ENCODE measurements at regions of chr17 and their contacts with region 1.

Region 1: DNA sequence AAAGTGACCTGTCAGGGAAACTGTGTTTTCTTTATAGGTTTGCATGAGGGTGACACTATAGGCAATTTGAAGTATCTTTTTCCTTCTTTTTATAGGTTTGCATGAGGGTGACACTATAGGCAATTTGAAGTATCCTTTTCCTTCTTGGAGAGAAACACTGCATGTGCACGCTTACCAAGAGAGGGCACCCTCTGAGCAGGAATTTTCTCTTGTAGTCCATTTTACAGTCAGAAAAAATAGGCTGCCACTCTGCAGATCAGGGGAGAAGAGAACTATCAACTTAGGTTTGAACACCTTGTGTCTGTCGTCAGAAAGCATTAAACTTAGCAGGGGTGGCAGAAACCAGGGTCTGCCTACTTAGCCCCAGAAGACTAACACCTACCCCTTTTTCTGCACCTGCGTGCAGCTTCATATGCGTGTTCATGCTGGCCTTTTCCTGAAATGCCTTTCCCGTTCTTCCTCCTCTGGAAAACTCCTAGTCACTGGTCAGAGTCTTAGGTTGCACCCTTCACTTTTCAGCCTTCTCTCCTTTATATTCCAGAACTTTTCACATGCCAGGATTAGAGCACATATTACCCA is 16.4 kb upstream of the SMIM36 start:
- DNase-seq: peak in 2 of 4 donors; percentile 27 to 62
- ATAC-seq: peak; percentile 82
- H3K4me3 ChIP-seq: no peak overlapping the region
- H3K27ac ChIP-seq: no peak overlapping the region
- H3K4me1 ChIP-seq: no peaks in the 10 kb centered on the region
- H3K27me3 ChIP-seq: no peaks in the 10 kb centered on the region
- CTCF ChIP-seq: peak; percentile 37 to 46

Region 2: GRCh38 chr17:55410722-55411462 is 116.7 kb before region 1 on chr17:
- intact Hi-C with region 1: no loop called
- DNase-seq: no peak
- ATAC-seq: peak; percentile 78
- H3K4me3 ChIP-seq: no peak overlapping the region
- H3K27ac ChIP-seq: no peak overlapping the region
- H3K4me1 ChIP-seq: no peaks in the 10 kb centered on the region
- H3K27me3 ChIP-seq: no peaks in the 10 kb centered on the region
- CTCF ChIP-seq: no peak

Region 3: DNA sequence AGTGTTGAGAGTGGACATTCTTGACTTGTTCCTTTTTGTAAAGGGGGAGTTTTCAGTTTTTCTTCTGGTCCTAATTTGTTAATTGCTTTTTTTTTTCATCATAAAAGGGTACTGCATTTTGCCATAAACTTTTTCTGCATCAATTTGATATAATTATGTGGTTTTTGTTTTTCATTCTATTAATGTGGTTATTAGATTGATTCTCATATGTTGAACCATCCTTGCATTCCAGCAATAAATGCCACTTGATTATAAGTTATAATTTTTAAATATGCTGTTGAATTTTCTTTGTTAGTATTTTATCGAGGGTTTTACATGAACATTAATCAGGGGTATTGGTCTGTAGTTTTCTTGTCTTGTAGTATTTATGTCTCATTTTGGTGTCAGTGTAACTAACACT is 70.9 kb after region 1 on chr17:
- intact Hi-C with region 1: loop called in 1 of 2 experiments (anchors 5 kb)
- DNase-seq: no peak
- ATAC-seq: no peak
- H3K4me3 ChIP-seq: no peak overlapping the region
- H3K27ac ChIP-seq: no peak overlapping the region
- H3K4me1 ChIP-seq: no peaks in the 10 kb centered on the region
- H3K27me3 ChIP-seq: no peaks in the 10 kb centered on the region
- CTCF ChIP-seq: no peak

Region 4: DNA sequence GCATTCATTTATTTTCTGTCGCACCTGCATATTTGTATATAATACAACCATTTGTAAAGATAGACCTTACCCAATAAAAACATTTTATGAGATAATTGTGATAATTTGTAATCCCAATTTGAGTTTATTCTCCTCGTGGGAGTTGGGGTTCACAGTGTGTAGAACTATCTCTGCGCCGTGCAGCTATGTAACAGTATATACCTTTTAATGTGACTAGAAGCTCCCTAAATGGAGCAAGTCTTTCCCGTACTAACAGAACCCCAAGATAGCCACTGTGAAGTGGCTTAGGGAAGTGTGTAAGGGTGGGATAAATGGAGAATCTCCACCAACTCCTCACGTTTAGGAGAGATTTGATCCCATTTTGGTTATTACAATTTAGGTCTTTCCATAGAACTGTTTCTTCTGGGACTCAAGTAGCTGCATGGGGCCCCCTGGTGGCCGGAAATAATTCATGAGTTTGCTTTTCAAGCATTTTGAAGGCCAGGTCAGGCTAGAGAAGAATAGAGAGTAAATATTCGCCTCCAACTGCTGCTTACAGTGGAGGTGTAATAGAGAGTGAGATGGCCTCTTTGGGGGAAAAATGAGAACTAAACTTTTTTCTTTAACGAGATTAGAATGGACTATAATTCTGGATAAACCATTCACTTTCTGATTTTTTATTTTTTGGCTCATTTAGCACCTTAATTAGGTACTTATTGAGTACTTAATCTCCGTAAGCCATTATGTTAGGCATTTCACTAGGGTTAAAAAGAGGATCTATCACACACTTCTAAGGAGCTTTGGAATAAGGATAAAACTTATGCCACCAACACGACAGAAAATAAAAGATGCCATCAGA is 190.5 kb after region 1 on chr17:
- intact Hi-C with region 1: loop called in 1 of 2 experiments (anchors 5 kb)
- DNase-seq: peak; percentile 57 to 77 (median 64)
- ATAC-seq: peak; percentile 73
- H3K4me3 ChIP-seq: no peak overlapping the region
- H3K27ac ChIP-seq: peak overlapping the region in 1 of 2 donors; percentile 64
- H3K4me1 ChIP-seq: no peaks in the 10 kb centered on the region
- H3K27me3 ChIP-seq: peaks cover 0 to 10% of the 10 kb centered on the region in 2 donors
- CTCF ChIP-seq: peak; percentile 70 to 77

Region 5: DNA sequence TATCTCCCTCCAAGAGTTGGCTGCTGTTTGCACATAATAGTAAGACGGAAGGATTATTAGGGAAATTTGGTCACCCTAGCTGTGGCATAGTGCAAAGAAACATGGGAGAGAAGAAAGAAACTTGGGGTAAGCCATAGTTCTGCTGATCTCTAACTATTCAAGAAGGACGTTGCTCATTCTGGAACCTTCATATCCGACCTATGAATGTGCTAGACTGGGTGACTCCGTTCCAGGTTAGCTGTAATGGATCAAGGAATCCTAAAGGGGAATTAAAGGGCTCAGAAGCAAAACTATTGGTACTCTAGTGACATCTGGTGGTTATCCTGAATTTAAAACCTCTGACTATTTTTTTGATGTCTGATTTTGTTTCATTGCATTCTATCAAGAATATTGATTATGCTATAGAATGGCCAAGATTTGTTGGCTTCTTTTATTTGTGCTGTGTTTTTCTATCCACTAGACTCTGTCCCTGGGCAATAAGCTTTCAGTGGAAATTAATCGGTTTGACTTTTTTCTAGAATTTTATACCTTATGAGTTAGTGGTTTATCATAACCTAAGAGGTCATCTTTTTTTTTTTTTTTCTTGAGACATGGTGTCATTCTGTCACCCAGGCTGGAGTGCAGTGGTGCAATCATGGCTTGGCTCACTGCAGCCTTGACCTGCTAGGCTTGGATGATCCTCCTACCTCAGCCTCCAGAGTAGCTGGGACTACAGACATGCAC is 242.7 kb after region 1 on chr17:
- intact Hi-C with region 1: loop called in 1 of 2 experiments (anchors 5 kb)
- DNase-seq: peak in 2 of 4 donors; percentile 24 to 55
- ATAC-seq: peak; percentile 75
- H3K4me3 ChIP-seq: no peak overlapping the region
- H3K27ac ChIP-seq: peak overlapping the region in 1 of 2 donors; percentile 39
- H3K4me1 ChIP-seq: peaks cover 5 to 18% of the 10 kb centered on the region in 2 donors
- H3K27me3 ChIP-seq: no peaks in the 10 kb centered on the region
- CTCF ChIP-seq: peak in 1 of 2 donors; percentile 59

Region 6: GRCh38 chr17:55783684-55784245 is 256.1 kb after region 1 on chr17:
- intact Hi-C with region 1: no loop called
- DNase-seq: peak in 3 of 4 donors; percentile 22 to 75 (median 73)
- ATAC-seq: peak; percentile 53
- H3K4me3 ChIP-seq: no peak overlapping the region
- H3K27ac ChIP-seq: peak overlapping the region in 1 of 2 donors; percentile 2
- H3K4me1 ChIP-seq: peaks cover 0 to 7% of the 10 kb centered on the region in 2 donors
- H3K27me3 ChIP-seq: no peaks in the 10 kb centered on the region
- CTCF ChIP-seq: no peak